ENCODE measurements at regions of chr2 and their contacts with region 1.

Region 1: GRCh38 chr2:138373993-138374408 is 127.6 kb upstream of the SPOPL start:
- DNase-seq: peak; percentile 17
- H3K4me3 ChIP-seq: no peak overlapping the region
- H3K27ac ChIP-seq: no peak overlapping the region
- H3K4me1 ChIP-seq: no peaks in the 10 kb centered on the region
- H3K27me3 ChIP-seq: no peaks in the 10 kb centered on the region
- CTCF ChIP-seq: peak; percentile 70 to 73

Region 2: GRCh38 chr2:137910641-137911040 is 463.4 kb before region 1 on chr2:
- CTCF ChIA-PET with region 1: interaction called, 8 read pairs
- dilution Hi-C with region 1: no loop called
- in situ Hi-C with region 1: no loop called
- intact Hi-C with region 1: loop called (anchors 1 kb)
- DNase-seq: no peak
- H3K4me3 ChIP-seq: no peak overlapping the region
- H3K27ac ChIP-seq: no peak overlapping the region
- H3K4me1 ChIP-seq: no peaks in the 10 kb centered on the region
- H3K27me3 ChIP-seq: no peaks in the 10 kb centered on the region
- CTCF ChIP-seq: peak; percentile 52 to 69

Region 3: GRCh38 chr2:137947728-137948336 is 426.2 kb before region 1 on chr2:
- CTCF ChIA-PET with region 1: no interaction called
- dilution Hi-C with region 1: no loop called
- in situ Hi-C with region 1: loop called in 1 of 2 experiments (anchors 25 kb)
- intact Hi-C with region 1: loop called (anchors 1 kb)
- DNase-seq: peak; percentile 56
- H3K4me3 ChIP-seq: no peak overlapping the region
- H3K27ac ChIP-seq: no peak overlapping the region
- H3K4me1 ChIP-seq: no peaks in the 10 kb centered on the region
- H3K27me3 ChIP-seq: no peaks in the 10 kb centered on the region
- CTCF ChIP-seq: peak; percentile 55 to 74

Region 4: GRCh38 chr2:138090330-138090729 is 283.7 kb before region 1 on chr2:
- CTCF ChIA-PET with region 1: no interaction called
- dilution Hi-C with region 1: no loop called
- in situ Hi-C with region 1: no loop called
- intact Hi-C with region 1: loop called (anchors 5 kb)
- DNase-seq: peak; percentile 56
- H3K4me3 ChIP-seq: no peak overlapping the region
- H3K27ac ChIP-seq: no peak overlapping the region
- H3K4me1 ChIP-seq: peaks cover 12% of the 10 kb centered on the region
- H3K27me3 ChIP-seq: no peaks in the 10 kb centered on the region
- CTCF ChIP-seq: peak; percentile 89 to 92

Region 5: GRCh38 chr2:138155304-138155703 is 218.7 kb before region 1 on chr2:
- CTCF ChIA-PET with region 1: no interaction called
- dilution Hi-C with region 1: no loop called
- in situ Hi-C with region 1: no loop called
- intact Hi-C with region 1: no loop called
- DNase-seq: no peak
- H3K4me3 ChIP-seq: no peak overlapping the region
- H3K27ac ChIP-seq: no peak overlapping the region
- H3K4me1 ChIP-seq: no peaks in the 10 kb centered on the region
- H3K27me3 ChIP-seq: no peaks in the 10 kb centered on the region
- CTCF ChIP-seq: no peak

Region 6: DNA sequence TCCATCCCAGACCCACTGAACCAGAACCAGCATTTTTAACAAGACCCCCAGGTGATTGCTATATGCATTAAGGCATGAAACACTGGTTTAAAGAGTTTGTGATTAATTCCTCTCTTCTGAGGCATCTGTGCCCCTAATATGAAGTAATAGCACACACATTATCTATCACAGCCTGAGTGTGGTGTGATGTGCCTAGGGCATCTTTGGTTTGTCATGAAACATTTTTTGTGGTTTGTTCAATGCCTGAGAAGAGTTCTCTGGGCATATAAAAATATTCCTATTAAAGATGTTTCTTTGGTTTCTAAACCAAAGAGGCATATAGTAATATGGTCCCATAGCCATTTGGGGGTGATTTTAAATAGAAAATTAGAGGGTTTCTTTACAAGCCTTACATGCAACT is 94.1 kb before region 1 on chr2:
- CTCF ChIA-PET with region 1: no interaction called
- dilution Hi-C with region 1: no loop called
- in situ Hi-C with region 1: no loop called
- intact Hi-C with region 1: no loop called
- DNase-seq: peak; percentile 29
- H3K4me3 ChIP-seq: no peak overlapping the region
- H3K27ac ChIP-seq: no peak overlapping the region
- H3K4me1 ChIP-seq: peaks cover 8% of the 10 kb centered on the region
- H3K27me3 ChIP-seq: no peaks in the 10 kb centered on the region
- CTCF ChIP-seq: no peak

Region 7: DNA sequence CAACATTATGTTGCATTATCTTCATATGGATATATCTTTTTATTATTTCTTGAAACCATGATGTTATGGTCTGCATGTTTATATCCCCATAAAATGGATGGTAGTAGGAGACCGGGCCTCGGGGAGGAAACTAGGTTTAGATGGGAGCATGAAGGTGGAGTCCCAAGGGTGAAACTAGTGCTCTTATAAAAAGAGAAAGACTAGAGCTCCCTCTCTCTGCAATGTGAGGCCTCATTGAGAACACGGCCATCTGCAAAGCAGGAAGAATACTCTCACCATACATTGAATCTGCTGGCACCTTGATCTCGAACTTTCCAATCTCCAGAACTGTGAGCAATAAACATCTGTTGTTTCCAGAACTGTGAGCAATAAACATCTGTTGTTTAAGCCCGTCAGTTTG is 342.2 kb after region 1 on chr2:
- CTCF ChIA-PET with region 1: no interaction called
- dilution Hi-C with region 1: no loop called
- in situ Hi-C with region 1: no loop called
- intact Hi-C with region 1: loop called (anchors 1 kb)
- DNase-seq: no peak
- H3K4me3 ChIP-seq: no peak overlapping the region
- H3K27ac ChIP-seq: no peak overlapping the region
- H3K4me1 ChIP-seq: peaks cover 10% of the 10 kb centered on the region
- H3K27me3 ChIP-seq: no peaks in the 10 kb centered on the region
- CTCF ChIP-seq: peak in 1 of 2 donors; percentile 36

Region 8: DNA sequence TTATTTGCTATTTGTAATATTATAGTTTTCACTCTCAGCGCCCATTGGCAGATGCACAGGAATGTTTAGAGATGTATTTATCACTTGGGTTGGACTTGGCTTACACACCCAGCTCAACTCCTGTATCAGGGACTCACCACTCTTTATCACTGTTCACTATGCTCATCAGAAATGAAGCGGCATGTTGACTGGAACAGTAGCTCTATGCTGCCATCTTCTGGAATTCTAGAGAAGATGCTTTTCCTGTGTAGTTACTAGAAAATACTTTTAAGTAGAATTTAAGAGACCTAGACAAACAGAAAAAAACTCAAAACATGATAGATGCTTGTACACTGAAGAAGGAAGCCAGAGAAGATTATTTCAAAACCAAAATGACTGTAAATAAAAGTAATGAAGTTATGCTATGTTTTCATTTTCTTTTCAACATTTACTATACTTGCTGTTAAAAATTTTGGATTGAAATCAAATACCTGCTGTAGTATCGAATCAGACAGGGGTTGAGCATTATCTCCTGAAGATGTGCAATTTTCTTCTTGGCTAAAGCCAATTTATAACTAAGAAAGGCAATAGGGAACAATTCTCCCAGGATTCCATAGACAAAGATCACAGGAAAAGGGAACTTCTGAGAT is 453.5 kb after region 1 on chr2:
- CTCF ChIA-PET with region 1: no interaction called
- dilution Hi-C with region 1: no loop called
- in situ Hi-C with region 1: no loop called
- intact Hi-C with region 1: loop called (anchors 2 kb)
- DNase-seq: peak; percentile 54
- H3K4me3 ChIP-seq: no peak overlapping the region
- H3K27ac ChIP-seq: no peak overlapping the region
- H3K4me1 ChIP-seq: no peaks in the 10 kb centered on the region
- H3K27me3 ChIP-seq: no peaks in the 10 kb centered on the region
- CTCF ChIP-seq: peak; percentile 64 to 71

Measured in mammary epithelial cell (primary cell).